CD8-positive, alpha-beta T cell (primary cell): ENCODE measurements at regions of chr18 and their contacts with region 1.

Region 1: GRCh38 chr18:2906704-2907549 is 60.1 kb downstream of the EMILIN2 start:
- DNase-seq: peak in 8 of 9 experiments; percentile 26 to 71 (median 45)
- ATAC-seq: peak; percentile 71
- H3K4me3 ChIP-seq: peak overlapping the region; percentile 63 to 70
- H3K4me3 Mint-ChIP-seq: peak overlapping the region; percentile 82
- H3K27ac ChIP-seq: peak overlapping the region; percentile 44 to 69
- H3K27ac Mint-ChIP-seq: peak overlapping the region; percentile 77
- H3K4me1 ChIP-seq: peaks cover 7% of the 10 kb centered on the region
- H3K4me1 Mint-ChIP-seq: peaks cover 17% of the 10 kb centered on the region
- H3K27me3 ChIP-seq: no peaks in the 10 kb centered on the region
- H3K27me3 Mint-ChIP-seq: no peaks in the 10 kb centered on the region
- CTCF ChIP-seq: peak; percentile 28

Region 2: GRCh38 chr18:1976484-1976883 is 930.4 kb before region 1 on chr18:
- CTCF ChIA-PET with region 1: no interaction called
- POLR2A ChIA-PET with region 1: no interaction called
- intact Hi-C with region 1: no loop called
- DNase-seq: no peak
- ATAC-seq: no peak
- H3K4me3 ChIP-seq: no peak overlapping the region
- H3K4me3 Mint-ChIP-seq: no peak overlapping the region
- H3K27ac ChIP-seq: no peak overlapping the region
- H3K27ac Mint-ChIP-seq: no peak overlapping the region
- H3K4me1 ChIP-seq: no peaks in the 10 kb centered on the region
- H3K4me1 Mint-ChIP-seq: no peaks in the 10 kb centered on the region
- H3K27me3 ChIP-seq: no peaks in the 10 kb centered on the region
- H3K27me3 Mint-ChIP-seq: no peaks in the 10 kb centered on the region
- CTCF ChIP-seq: no peak

Region 3: DNA sequence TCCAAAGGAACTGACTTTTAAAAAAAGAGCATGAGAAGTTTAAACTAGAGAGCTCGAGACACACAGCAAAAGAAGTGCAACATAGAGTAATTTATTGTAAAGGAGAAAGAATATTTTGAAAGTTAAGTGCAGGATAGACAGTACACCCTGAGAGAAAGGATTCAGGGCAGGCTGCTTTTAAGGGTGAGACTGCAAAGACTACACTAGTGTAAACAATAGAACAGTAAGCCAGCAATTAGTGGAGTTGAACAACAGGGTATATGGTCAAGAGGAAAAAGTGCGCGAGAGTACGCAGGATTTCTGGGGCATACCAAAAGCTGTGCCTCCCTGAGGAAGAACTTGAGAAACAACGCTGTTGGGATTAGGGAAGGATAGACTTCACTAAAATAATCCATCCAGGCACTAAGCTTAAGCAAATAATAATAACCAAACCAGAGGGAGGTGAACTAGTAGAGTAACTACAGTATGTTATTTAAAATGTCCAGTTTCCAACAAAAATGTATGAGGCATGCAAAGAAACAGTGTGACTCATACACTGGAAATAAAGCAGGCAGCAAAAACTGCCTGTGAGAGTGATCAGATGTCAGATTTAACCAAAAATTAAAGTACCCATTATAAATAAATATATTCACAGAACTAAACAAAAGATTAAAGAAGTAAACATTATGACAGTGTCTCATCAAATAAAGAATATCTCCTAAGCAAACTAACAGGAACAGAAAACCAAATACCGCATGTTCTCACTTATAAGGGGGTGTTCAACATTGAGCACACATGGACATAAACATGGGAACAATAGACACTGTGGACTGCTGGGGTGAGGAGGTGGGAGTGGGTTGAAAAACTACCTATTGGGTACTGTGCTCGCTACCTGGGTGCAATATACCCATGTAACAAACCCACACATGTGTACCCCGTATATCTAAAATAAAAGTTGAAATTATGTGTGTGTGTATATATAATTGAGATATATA is 100.7 kb before region 1 on chr18:
- CTCF ChIA-PET with region 1: no interaction called
- POLR2A ChIA-PET with region 1: no interaction called
- intact Hi-C with region 1: loop called in 1 of 2 experiments (anchors 5 kb)
- DNase-seq: no peak
- ATAC-seq: no peak
- H3K4me3 ChIP-seq: no peak overlapping the region
- H3K4me3 Mint-ChIP-seq: no peak overlapping the region
- H3K27ac ChIP-seq: no peak overlapping the region
- H3K27ac Mint-ChIP-seq: peak overlapping the region; percentile 58
- H3K4me1 ChIP-seq: no peaks in the 10 kb centered on the region
- H3K4me1 Mint-ChIP-seq: no peaks in the 10 kb centered on the region
- H3K27me3 ChIP-seq: no peaks in the 10 kb centered on the region
- H3K27me3 Mint-ChIP-seq: no peaks in the 10 kb centered on the region
- CTCF ChIP-seq: no peak

Region 4: DNA sequence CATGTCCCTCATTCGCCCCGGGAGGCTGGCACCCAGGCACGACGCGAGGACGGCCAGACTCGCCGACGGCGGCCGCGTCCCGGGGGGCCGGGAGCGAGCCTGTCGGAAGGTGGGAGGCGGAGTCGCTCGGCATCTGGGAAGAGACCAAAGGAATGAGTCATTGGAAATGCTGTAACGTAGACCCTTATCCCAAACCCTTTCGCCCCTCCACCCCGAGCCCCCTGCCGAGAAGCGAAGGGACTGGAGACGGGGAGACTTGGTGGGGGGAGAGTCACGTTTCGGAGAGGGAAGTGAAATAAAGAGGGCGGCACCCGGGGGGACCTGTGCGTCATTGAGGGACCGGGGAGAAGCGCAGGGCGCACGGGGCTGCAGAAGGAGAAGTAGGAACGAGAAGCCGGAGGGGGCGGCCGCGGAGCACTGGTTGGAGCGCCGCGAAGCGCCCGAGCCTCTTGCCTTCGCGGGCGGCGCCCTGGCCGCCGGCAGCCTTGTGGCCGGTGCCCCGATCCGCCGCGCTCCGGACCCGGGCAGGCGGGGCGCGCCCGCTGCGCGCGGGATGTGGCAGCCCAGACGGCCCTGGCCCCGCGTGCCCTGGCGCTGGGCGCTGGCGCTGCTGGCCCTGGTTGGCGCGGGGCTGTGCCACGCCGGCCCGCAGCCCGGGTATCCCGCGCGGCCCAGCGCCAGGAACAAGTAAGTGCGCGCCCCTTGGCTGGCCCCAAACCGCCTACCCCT is 60.1 kb before region 1 on chr18 and contains the start of gene EMILIN2:
- CTCF ChIA-PET with region 1: no interaction called
- POLR2A ChIA-PET with region 1: no interaction called
- intact Hi-C with region 1: loop called in 1 of 2 experiments (anchors 2 kb)
- DNase-seq: peak in 8 of 9 experiments; percentile 9 to 61 (median 47)
- ATAC-seq: peak; percentile 52
- H3K4me3 ChIP-seq: peak within 1 kb of the TSS; percentile 46 to 69
- H3K4me3 Mint-ChIP-seq: peak within 1 kb of the TSS; percentile 88
- H3K27ac ChIP-seq: no peak within 1 kb of the TSS
- H3K27ac Mint-ChIP-seq: no peak within 1 kb of the TSS
- H3K4me1 ChIP-seq: peaks cover 9% of the 10 kb centered on the region
- H3K4me1 Mint-ChIP-seq: peaks cover 19% of the 10 kb centered on the region
- H3K27me3 ChIP-seq: peaks cover 6 to 17% of the 10 kb centered on the region in 2 experiments
- H3K27me3 Mint-ChIP-seq: peaks cover 47% of the 10 kb centered on the region
- CTCF ChIP-seq: no peak
- total RNA-seq, gene EMILIN2: 1.6 to 1.7 TPM

Region 5: GRCh38 chr18:2881088-2881839 is 25.7 kb before region 1 on chr18:
- CTCF ChIA-PET with region 1: interaction called, 4 read pairs
- POLR2A ChIA-PET with region 1: no interaction called
- intact Hi-C with region 1: loop called in 1 of 2 experiments (anchors 2 kb)
- DNase-seq: no peak
- ATAC-seq: no peak
- H3K4me3 ChIP-seq: no peak overlapping the region
- H3K4me3 Mint-ChIP-seq: peak overlapping the region; percentile 50
- H3K27ac ChIP-seq: peak overlapping the region in 1 of 2 experiments; percentile 74
- H3K27ac Mint-ChIP-seq: peak overlapping the region; percentile 55
- H3K4me1 ChIP-seq: peaks cover 39% of the 10 kb centered on the region
- H3K4me1 Mint-ChIP-seq: peaks cover 35% of the 10 kb centered on the region
- H3K27me3 ChIP-seq: no peaks in the 10 kb centered on the region
- H3K27me3 Mint-ChIP-seq: no peaks in the 10 kb centered on the region
- CTCF ChIP-seq: no peak